Heart left ventricle (tissue), 16 donors: ENCODE measurements at regions of chr1 and their contacts with region 1.

Region 1: GRCh38 chr1:180070286-180070685 is 84.4 kb upstream of the QSOX1 start:
- DNase-seq: no peak
- ATAC-seq: no peak
- H3K4me3 ChIP-seq: no peak overlapping the region
- H3K27ac ChIP-seq: no peak overlapping the region
- H3K4me1 ChIP-seq: no peaks in the 10 kb centered on the region
- H3K27me3 ChIP-seq: no peaks in the 10 kb centered on the region
- CTCF ChIP-seq: no peak
- POLR2A ChIP-seq: no peak

Region 2: DNA sequence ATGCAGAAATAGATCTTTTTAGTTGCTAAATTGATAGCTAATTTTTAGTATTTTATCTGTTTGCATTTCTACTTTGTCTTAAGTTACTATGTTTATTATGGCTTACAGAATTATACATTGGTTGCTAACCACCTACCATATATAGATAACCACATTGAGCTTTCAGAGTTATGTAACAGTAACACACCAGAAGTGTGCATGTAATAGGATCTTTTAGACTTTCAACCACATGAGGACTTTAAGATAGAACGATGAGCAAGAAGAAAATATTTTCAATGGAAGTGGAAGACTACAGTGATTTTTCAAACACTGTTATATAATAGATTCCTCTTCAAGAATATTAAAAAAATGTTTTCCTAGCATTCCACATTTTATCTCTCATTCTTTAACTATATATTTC is 159.4 kb before region 1 on chr1:
- intact Hi-C with region 1: loop called in 2 of 10 experiments (anchors 10 kb)
- DNase-seq: no peak
- ATAC-seq: no peak
- H3K4me3 ChIP-seq: no peak overlapping the region
- H3K27ac ChIP-seq: no peak overlapping the region
- H3K4me1 ChIP-seq: no peaks in the 10 kb centered on the region
- H3K27me3 ChIP-seq: no peaks in the 10 kb centered on the region
- CTCF ChIP-seq: no peak
- POLR2A ChIP-seq: no peak

Region 3: GRCh38 chr1:179917601-179918429 is 152.5 kb before region 1 on chr1:
- intact Hi-C with region 1: loop called in 1 of 10 experiments (anchors 10 kb)
- DNase-seq: no peak
- ATAC-seq: no peak
- H3K4me3 ChIP-seq: no peak overlapping the region
- H3K27ac ChIP-seq: no peak overlapping the region
- H3K4me1 ChIP-seq: peaks cover 0 to 5% (median 0%) of the 10 kb centered on the region in 12 donors
- H3K27me3 ChIP-seq: no peaks in the 10 kb centered on the region
- CTCF ChIP-seq: no peak
- POLR2A ChIP-seq: no peak

Region 4: DNA sequence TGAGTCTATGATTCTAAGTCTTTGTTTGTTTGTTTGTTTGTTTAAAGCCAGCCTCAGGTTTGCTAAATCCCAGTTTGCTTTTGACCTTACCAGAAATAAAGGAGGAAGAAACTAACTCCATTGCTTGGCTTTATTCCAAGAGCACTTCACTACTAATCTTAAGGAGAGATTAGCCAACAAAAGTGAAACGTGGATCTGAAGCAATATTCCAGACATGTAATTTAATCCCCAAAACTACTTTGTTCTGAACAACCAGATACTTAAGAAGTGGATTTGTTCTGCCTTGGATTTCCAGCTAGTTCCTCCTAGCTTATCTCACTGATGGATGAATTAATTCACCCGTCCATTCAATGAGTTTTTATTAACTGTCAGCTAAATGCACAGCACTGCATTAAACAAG is 131.5 kb before region 1 on chr1:
- intact Hi-C with region 1: no loop called
- DNase-seq: no peak
- ATAC-seq: no peak
- H3K4me3 ChIP-seq: no peak overlapping the region
- H3K27ac ChIP-seq: no peak overlapping the region
- H3K4me1 ChIP-seq: no peaks in the 10 kb centered on the region
- H3K27me3 ChIP-seq: no peaks in the 10 kb centered on the region
- CTCF ChIP-seq: no peak
- POLR2A ChIP-seq: no peak